Dendritic cell treated with granulocyte-macrophage colony-stimulating factor and Interleukin-4, amounts not matched to agents 40 ng/mL and 50 ng/mL, for 4 days (primary cell): ENCODE measurements at regions of chr1 and their contacts with region 1.

Region 1: DNA sequence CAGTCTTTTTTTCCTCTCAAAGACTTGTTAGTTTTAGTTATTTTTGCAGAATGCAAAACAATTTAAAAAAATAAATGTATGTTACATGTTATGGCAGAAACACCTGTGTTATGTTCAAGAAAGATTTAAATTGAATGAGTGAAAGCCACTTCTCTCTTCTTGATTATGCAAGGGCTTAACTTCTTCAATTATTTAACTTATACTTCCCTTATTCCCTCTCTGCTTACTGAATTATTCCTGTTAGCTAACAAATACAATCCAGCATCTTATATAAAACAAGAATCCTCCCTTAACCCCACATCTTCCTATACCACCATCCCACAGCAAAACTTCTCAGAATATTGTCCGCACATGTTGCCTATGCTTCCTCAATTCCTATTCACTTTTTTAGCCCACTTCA is 10.7 kb upstream of the FCER1A start:
- H3K4me3 Mint-ChIP-seq: peak overlapping the region; percentile 30
- H3K27ac Mint-ChIP-seq: peak overlapping the region; percentile 73
- H3K4me1 Mint-ChIP-seq: peaks cover 39% of the 10 kb centered on the region
- H3K27me3 Mint-ChIP-seq: no peaks in the 10 kb centered on the region

Region 2: GRCh38 chr1:159444511-159444910 is 153.1 kb after region 1 on chr1:
- intact Hi-C with region 1: loop called (anchors 10 kb)
- H3K4me3 Mint-ChIP-seq: no peak overlapping the region
- H3K27ac Mint-ChIP-seq: no peak overlapping the region
- H3K4me1 Mint-ChIP-seq: peaks cover 55% of the 10 kb centered on the region
- H3K27me3 Mint-ChIP-seq: no peaks in the 10 kb centered on the region